Endothelial cell of umbilical vein (primary cell): ENCODE measurements at regions of chr5 and their contacts with region 1.

Region 1: DNA sequence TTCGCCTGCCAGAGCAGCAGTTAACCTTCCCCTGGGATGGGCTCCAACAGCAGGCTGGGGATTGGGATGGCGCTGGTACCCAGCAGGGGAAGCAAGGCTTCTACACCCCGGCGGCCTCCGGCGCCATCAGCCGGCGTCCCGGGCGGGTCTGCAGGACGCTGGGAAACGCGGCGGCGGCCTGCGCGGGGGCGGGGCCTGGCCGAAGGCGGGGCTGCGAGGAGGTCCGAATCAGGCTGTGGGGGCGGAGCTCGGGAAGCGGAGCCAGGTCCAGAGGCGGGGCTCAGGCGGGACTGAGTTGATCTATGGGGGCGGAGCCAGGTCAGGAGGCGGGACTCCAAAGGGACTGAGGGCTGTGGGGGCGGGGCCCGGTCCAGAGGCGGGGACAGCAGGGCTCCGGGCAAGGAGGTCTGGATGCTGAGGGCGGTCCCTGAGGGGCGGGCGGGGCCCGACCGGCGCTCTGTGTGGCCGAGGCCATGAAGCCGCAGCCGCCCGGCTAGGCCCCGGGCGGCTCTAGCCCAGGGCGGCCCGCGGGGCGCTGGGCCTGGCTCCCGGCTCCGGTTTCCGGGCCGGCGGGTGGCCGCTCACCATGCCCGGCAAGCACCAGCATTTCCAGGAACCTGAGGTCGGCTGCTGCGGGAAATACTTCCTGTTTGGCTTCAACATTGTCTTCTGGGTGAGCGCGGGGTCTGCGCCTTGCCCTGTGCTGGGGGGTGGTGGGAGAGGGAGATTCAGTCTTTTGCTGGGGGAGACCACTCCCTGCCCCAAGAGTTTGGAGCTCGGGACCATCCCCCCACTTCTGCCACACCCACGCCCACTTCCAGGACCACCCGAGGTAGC is at the start of gene TSPAN17:
- DNase-seq: peak; percentile 99
- H3K4me3 ChIP-seq: peak within 1 kb of the TSS; percentile 29 to 51 (median 50)
- H3K27ac ChIP-seq: peak within 1 kb of the TSS; percentile 0
- H3K4me1 ChIP-seq: peaks cover 12% of the 10 kb centered on the region
- H3K27me3 ChIP-seq: no peaks in the 10 kb centered on the region
- CTCF ChIP-seq: peak in 1 of 2 donors; percentile 10
- POLR2A ChIP-seq: peak; percentile 98
- total RNA-seq, gene TSPAN17: 55.9 and 57.0 TPM in 2 replicates

Region 2: GRCh38 chr5:176388444-176389134 is 258.7 kb before region 1 on chr5 and contains the starts of genes HIGD2A and NOP16:
- CTCF ChIA-PET with region 1: no interaction called
- POLR2A ChIA-PET with region 1: no interaction called
- dilution Hi-C with region 1: no loop called
- intact Hi-C with region 1: loop called (anchors 1 kb)
- DNase-seq: peak; percentile 98
- H3K4me3 ChIP-seq: peak within 1 kb of the TSS; percentile 64 to 85 (median 65)
- H3K27ac ChIP-seq: peak within 1 kb of the TSS; percentile 79
- H3K4me1 ChIP-seq: peaks cover 14% of the 10 kb centered on the region
- H3K27me3 ChIP-seq: no peaks in the 10 kb centered on the region
- CTCF ChIP-seq: no peak
- POLR2A ChIP-seq: peak; percentile 74
- total RNA-seq, gene HIGD2A: 96.2 and 103 TPM in 2 replicates
- total RNA-seq, gene NOP16: 47.4 and 51.6 TPM in 2 replicates

Region 3: GRCh38 chr5:176573564-176574296 is 73.5 kb before region 1 on chr5:
- CTCF ChIA-PET with region 1: interaction called, 5 read pairs
- POLR2A ChIA-PET with region 1: interaction called, 3 read pairs
- dilution Hi-C with region 1: no loop called
- intact Hi-C with region 1: loop called (anchors 1 kb)
- DNase-seq: peak; percentile 45
- H3K4me3 ChIP-seq: no peak overlapping the region
- H3K27ac ChIP-seq: no peak overlapping the region
- H3K4me1 ChIP-seq: no peaks in the 10 kb centered on the region
- H3K27me3 ChIP-seq: no peaks in the 10 kb centered on the region
- CTCF ChIP-seq: peak; percentile 74 to 91
- POLR2A ChIP-seq: no peak

Region 4: GRCh38 chr5:176609724-176610434 is 37.4 kb before region 1 on chr5 and contains the start of gene GPRIN1:
- CTCF ChIA-PET with region 1: no interaction called
- POLR2A ChIA-PET with region 1: no interaction called
- dilution Hi-C with region 1: no loop called
- intact Hi-C with region 1: loop called (anchors 1 kb)
- DNase-seq: peak; percentile 59
- H3K4me3 ChIP-seq: peak within 1 kb of the TSS; percentile 18 to 63 (median 47)
- H3K27ac ChIP-seq: no peak within 1 kb of the TSS
- H3K4me1 ChIP-seq: peaks cover 6% of the 10 kb centered on the region
- H3K27me3 ChIP-seq: no peaks in the 10 kb centered on the region
- CTCF ChIP-seq: peak; percentile 20 to 35
- POLR2A ChIP-seq: no peak
- total RNA-seq, gene GPRIN1: 9.3 and 10.4 TPM in 2 replicates

Region 5: DNA sequence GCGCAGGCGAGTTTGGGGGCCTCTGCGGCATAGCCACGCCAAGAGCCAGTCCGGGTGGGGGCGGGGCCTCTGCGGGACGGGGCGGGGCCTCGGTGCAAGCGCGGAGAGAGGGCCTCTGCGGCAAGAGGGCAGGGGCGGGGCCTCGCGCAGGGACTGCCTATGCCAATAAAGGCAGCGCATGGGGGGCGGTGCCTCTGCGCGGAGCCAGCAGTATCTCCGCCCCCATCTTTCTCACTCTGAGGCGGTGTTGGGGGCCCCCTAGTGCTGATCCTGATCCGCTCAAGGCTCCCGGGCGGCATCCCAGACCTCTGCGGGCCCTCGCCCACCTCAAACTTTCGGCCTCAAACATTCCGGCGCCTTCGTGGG is 28.1 kb before region 1 on chr5:
- CTCF ChIA-PET with region 1: interaction called, 7 read pairs
- POLR2A ChIA-PET with region 1: no interaction called
- dilution Hi-C with region 1: no loop called
- intact Hi-C with region 1: loop called (anchors 2 kb)
- DNase-seq: peak; percentile 87
- H3K4me3 ChIP-seq: no peak overlapping the region
- H3K27ac ChIP-seq: no peak overlapping the region
- H3K4me1 ChIP-seq: peaks cover 21% of the 10 kb centered on the region
- H3K27me3 ChIP-seq: peaks cover 29 to 30% of the 10 kb centered on the region in 2 experiments
- CTCF ChIP-seq: peak; percentile 47 to 66
- POLR2A ChIP-seq: no peak

Region 6: GRCh38 chr5:176629853-176630712 is 17.2 kb before region 1 on chr5 and contains the starts of genes EIF4E1B and SNCB:
- CTCF ChIA-PET with region 1: interaction called, 10 read pairs
- POLR2A ChIA-PET with region 1: interaction called, 4 read pairs
- dilution Hi-C with region 1: no loop called
- intact Hi-C with region 1: loop called (anchors 1 kb)
- DNase-seq: peak; percentile 49
- H3K4me3 ChIP-seq: peak within 1 kb of the TSS in 2 of 3 experiments; percentile 1 to 18
- H3K27ac ChIP-seq: no peak within 1 kb of the TSS
- H3K4me1 ChIP-seq: no peaks in the 10 kb centered on the region
- H3K27me3 ChIP-seq: peaks cover 59 to 61% of the 10 kb centered on the region in 2 experiments
- CTCF ChIP-seq: no peak
- POLR2A ChIP-seq: no peak
- total RNA-seq, gene EIF4E1B: not detected in 2 replicates
- total RNA-seq, gene SNCB: not detected in 2 replicates